ENCODE measurements at regions of chr9 and their contacts with region 1.

Region 1: GRCh38 chr9:98775831-98776441 is 20.4 kb downstream of the ANKS6 start:
- DNase-seq: peak; percentile 74 to 80
- ATAC-seq: peak; percentile 68 to 90
- H3K4me3 ChIP-seq: no peak overlapping the region
- H3K27ac ChIP-seq: no peak overlapping the region
- H3K4me1 ChIP-seq: peaks cover 17% of the 10 kb centered on the region
- CTCF ChIP-seq: peak; percentile 75
- EP300 ChIP-seq: no peak
- POLR2A ChIP-seq: no peak
- RAD21 ChIP-seq: peak; percentile 75 to 83

Region 2: GRCh38 chr9:98306384-98307160 is 469.4 kb before region 1 on chr9:
- CTCF ChIA-PET with region 1: interaction called, 164 read pairs
- POLR2A ChIA-PET with region 1: no interaction called
- DNase-seq: peak in 1 of 2 experiments; percentile 30
- ATAC-seq: peak in 1 of 2 experiments; percentile 36; a peak in 2 of 6 replicates
- H3K4me3 ChIP-seq: no peak overlapping the region
- H3K27ac ChIP-seq: no peak overlapping the region
- H3K4me1 ChIP-seq: no peaks in the 10 kb centered on the region
- CTCF ChIP-seq: no peak
- EP300 ChIP-seq: no peak
- POLR2A ChIP-seq: no peak
- RAD21 ChIP-seq: no peak

Region 3: GRCh38 chr9:98707166-98708102 is 68.5 kb before region 1 on chr9:
- CTCF ChIA-PET with region 1: interaction called, 22 read pairs
- POLR2A ChIA-PET with region 1: no interaction called
- DNase-seq: peak; percentile 69 to 78
- ATAC-seq: peak; percentile 80 to 95
- H3K4me3 ChIP-seq: peak overlapping the region; percentile 52
- H3K27ac ChIP-seq: no peak overlapping the region
- H3K4me1 ChIP-seq: peaks cover 15% of the 10 kb centered on the region
- CTCF ChIP-seq: peak; percentile 54
- EP300 ChIP-seq: no peak
- POLR2A ChIP-seq: no peak
- RAD21 ChIP-seq: peak; percentile 69 to 73

Region 4: DNA sequence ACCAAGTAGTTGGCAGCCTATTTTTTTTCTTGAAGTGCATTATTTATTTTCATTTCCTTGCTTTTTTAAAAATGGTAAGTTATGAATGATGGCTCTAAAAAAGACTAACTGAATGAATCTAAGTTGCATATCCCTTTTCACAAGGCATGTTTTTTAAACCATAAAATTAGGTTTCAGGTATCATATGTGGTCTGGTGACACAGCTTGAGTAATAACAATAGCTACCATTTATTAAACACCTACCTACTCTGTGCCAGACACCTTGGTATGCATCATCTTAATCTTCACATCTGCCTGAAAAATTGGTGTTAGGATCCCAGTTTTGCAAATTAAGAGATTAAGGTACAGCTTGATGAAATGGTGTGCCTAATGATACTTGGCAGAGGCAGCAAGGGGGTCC is 62.9 kb before region 1 on chr9:
- CTCF ChIA-PET with region 1: interaction called, 22 read pairs
- POLR2A ChIA-PET with region 1: no interaction called
- DNase-seq: no peak
- ATAC-seq: no peak
- H3K4me3 ChIP-seq: no peak overlapping the region
- H3K27ac ChIP-seq: no peak overlapping the region
- H3K4me1 ChIP-seq: peaks cover 8% of the 10 kb centered on the region
- CTCF ChIP-seq: no peak
- EP300 ChIP-seq: no peak
- POLR2A ChIP-seq: no peak
- RAD21 ChIP-seq: no peak

Region 5: DNA sequence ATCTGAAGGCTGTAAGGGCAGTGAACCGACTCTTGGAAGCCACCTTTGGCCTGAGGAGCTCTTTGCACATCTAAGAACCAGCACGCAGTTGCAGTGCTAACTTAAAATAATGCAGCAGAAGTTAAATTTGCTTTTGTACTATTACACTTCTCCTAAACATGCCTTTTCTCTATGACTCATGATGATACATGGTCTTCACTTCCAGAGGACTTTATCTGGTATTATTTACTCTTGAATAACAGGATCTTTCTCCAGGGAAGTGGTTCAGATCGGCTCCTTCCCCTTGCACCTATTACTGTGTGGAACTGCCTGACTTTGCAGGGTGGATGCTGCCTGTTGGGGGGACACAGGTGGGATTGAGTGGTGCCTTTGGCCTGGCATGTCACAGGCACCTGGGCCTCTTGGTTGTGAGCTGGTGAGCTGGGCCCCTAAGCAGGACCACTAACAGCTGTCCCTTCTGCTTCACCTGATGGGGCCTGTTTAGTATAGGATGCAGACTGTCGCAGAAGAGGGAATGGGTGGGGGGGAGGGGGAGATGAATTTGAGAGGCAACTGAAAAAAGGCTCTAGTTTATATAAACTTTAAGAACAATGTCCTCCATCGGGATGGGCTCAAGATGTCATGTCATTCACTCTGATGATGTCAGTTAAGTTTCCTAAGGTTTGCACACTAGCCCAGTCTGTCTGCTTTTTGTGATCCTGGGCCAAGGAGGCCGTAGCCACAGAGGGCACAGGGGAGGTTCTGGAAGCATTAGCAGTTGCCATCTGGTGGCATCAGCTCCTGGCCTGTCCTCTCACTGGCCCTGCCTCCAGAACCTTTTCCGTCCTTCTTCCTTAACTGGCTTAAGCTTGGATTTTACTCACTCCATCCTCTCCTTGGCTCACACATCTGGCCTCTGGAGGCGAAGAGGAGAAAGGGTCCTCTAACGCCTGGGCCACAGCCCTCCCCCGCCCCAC is 33.3 kb before region 1 on chr9:
- CTCF ChIA-PET with region 1: interaction called, 13 read pairs
- POLR2A ChIA-PET with region 1: no interaction called
- DNase-seq: peak; percentile 13 to 18
- ATAC-seq: peak; percentile 58 to 83
- H3K4me3 ChIP-seq: no peak overlapping the region
- H3K27ac ChIP-seq: peak overlapping the region in 1 of 2 experiments; percentile 56; a peak in 2 of 6 replicates
- H3K4me1 ChIP-seq: peaks cover 19% of the 10 kb centered on the region
- CTCF ChIP-seq: no peak
- EP300 ChIP-seq: no peak
- POLR2A ChIP-seq: no peak
- RAD21 ChIP-seq: no peak

Region 6: DNA sequence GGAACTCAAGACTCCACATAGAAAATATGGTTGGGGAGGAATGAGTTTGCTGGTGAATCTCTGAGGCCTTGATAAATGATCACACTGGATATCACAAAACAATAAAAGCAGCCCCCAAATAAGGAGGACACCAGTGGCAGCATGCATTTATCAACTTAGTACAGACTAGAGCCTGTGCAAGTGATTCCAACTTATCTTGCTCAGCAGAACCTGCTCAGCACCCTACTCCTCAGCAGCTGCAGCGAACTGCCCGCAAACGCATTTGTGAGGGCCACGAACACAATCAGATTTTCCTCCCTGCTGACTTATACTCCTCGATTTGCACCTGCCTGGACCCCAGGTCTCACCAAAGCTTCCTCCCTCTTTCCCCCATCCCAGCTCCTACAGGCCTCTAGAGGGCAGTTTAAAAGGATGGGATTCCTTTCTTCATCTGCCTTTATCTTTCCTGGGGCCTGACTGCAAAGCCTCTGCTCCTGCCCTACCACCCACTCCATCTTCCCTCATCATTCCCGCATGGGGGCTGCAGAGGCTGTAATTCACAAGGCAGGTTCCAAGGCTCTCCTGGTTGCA is 20.8 kb before region 1 on chr9:
- CTCF ChIA-PET with region 1: interaction called, 34 read pairs
- POLR2A ChIA-PET with region 1: no interaction called
- DNase-seq: no peak
- ATAC-seq: no peak
- H3K4me3 ChIP-seq: no peak overlapping the region
- H3K27ac ChIP-seq: no peak overlapping the region
- H3K4me1 ChIP-seq: no peaks in the 10 kb centered on the region
- CTCF ChIP-seq: no peak
- EP300 ChIP-seq: no peak
- POLR2A ChIP-seq: no peak
- RAD21 ChIP-seq: no peak

Region 7: GRCh38 chr9:98791147-98792095 is 15.5 kb after region 1 on chr9:
- CTCF ChIA-PET with region 1: interaction called, 146 read pairs
- POLR2A ChIA-PET with region 1: no interaction called
- DNase-seq: peak; percentile 77 to 81
- ATAC-seq: peak; percentile 66 to 95
- H3K4me3 ChIP-seq: no peak overlapping the region
- H3K27ac ChIP-seq: peak overlapping the region in 1 of 2 experiments; percentile 53; a peak in 2 of 6 replicates
- H3K4me1 ChIP-seq: peaks cover 24% of the 10 kb centered on the region
- CTCF ChIP-seq: peak; percentile 95
- EP300 ChIP-seq: no peak
- POLR2A ChIP-seq: no peak
- RAD21 ChIP-seq: peak; percentile 65 to 70

Region 8: GRCh38 chr9:98867429-98868168 is 91.7 kb after region 1 on chr9:
- CTCF ChIA-PET with region 1: no interaction called
- POLR2A ChIA-PET with region 1: no interaction called
- DNase-seq: peak in 1 of 2 experiments; percentile 15
- ATAC-seq: peak in 1 of 2 experiments; percentile 51; a peak in 2 of 6 replicates
- H3K4me3 ChIP-seq: no peak overlapping the region
- H3K27ac ChIP-seq: peak overlapping the region; percentile 72 to 73
- H3K4me1 ChIP-seq: peaks cover 10% of the 10 kb centered on the region; the same call in 2 of the 3 replicates
- CTCF ChIP-seq: no peak
- EP300 ChIP-seq: no peak
- POLR2A ChIP-seq: no peak
- RAD21 ChIP-seq: no peak

Region 9: DNA sequence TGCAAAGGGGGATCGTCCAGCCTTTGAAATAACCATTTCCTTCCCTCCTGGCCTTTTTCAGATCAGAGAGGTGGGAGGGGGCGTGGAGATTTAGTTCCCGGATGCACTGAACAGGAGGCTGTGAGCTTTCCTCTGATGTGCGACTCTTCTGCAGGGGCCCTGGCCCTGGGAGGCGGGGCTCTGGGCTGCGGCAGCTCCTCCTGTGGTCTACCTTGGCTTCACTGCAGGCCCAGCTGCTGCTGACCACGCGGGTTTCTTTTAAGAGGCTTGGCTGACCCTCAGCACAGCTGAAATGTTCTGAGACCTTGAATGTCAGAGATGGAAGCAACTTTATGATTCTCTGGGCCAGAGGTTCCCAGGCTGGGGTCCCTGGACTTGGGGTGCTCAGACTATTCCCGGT is 140.7 kb after region 1 on chr9:
- CTCF ChIA-PET with region 1: no interaction called
- POLR2A ChIA-PET with region 1: no interaction called
- DNase-seq: no peak
- ATAC-seq: no peak
- H3K4me3 ChIP-seq: no peak overlapping the region
- H3K27ac ChIP-seq: no peak overlapping the region
- H3K4me1 ChIP-seq: no peaks in the 10 kb centered on the region
- CTCF ChIP-seq: no peak
- EP300 ChIP-seq: no peak
- POLR2A ChIP-seq: no peak
- RAD21 ChIP-seq: no peak

Measured in A549 (cell line).